ENCODE measurements at regions of chr1 and their contacts with region 1.

Region 1: GRCh38 chr1:117664314-117664713 is 58.5 kb downstream of the TENT5C start:
- DNase-seq: peak in 2 of 3 donors; percentile 52 to 69
- H3K4me3 ChIP-seq: no peak overlapping the region
- H3K27ac ChIP-seq: no peak overlapping the region
- H3K4me1 ChIP-seq: peaks cover 0 to 25% (median 0%) of the 10 kb centered on the region in 4 experiments
- H3K27me3 ChIP-seq: peaks cover 0 to 11% (median 0%) of the 10 kb centered on the region in 5 experiments

Region 2: GRCh38 chr1:117620440-117620839 is 43.9 kb before region 1 on chr1:
- CTCF ChIA-PET with region 1: no interaction called
- POLR2A ChIA-PET with region 1: no interaction called
- DNase-seq: no peak
- H3K4me3 ChIP-seq: no peak overlapping the region
- H3K27ac ChIP-seq: no peak overlapping the region
- H3K4me1 ChIP-seq: peaks cover 6 to 32% (median 15%) of the 10 kb centered on the region in 4 experiments
- H3K27me3 ChIP-seq: no peaks in the 10 kb centered on the region

Region 3: DNA sequence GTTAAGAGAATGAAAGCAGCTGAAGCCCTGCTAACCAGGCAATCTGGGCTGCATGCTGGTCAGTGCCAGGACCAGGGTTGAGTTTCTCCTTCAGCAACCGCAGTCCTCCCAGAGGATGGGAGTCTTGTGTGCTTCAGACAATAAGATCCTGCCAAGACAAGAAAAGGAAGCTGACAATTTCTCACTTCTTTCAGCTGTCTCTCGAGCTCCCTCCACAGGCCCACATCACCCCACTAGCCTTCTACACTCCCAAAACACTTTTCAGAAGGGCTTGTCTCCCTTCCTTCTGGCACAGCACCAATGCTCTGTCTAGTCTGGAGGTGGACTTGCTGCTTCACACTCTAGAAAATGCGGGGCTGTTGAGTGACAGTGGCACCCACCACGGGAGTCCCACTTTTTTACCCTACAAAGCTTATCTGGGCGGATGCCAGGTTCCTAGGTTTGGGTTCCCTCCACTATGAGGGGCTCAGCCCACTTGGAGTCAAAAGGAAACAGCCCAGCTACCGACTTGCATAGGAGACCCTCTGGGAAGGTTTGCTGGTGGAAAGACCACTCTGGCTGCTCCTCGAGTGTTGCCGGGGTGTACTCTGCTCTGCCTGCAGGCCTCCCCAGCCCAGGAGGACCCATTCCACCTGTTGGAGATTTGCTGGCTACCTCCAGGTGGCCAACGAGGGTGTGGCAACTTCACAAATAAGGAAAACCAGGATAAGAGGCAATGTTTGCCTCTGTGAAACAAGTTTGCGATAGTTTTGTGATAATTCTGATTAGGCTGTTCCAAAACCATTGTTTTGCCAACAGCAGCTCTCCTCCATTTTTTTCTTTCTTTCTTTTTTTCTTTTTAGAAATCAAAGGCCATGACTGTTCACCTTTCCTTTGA is 10.4 kb after region 1 on chr1:
- CTCF ChIA-PET with region 1: interaction called, 17 read pairs
- POLR2A ChIA-PET with region 1: no interaction called
- DNase-seq: peak; percentile 39 to 63 (median 58)
- H3K4me3 ChIP-seq: no peak overlapping the region
- H3K27ac ChIP-seq: no peak overlapping the region
- H3K4me1 ChIP-seq: peaks cover 0 to 2% (median 0%) of the 10 kb centered on the region in 4 experiments
- H3K27me3 ChIP-seq: no peaks in the 10 kb centered on the region

Measured in common myeloid progenitor, CD34-positive (primary cell).